ENCODE measurements at regions of chr20 and their contacts with region 1.

Region 1: DNA sequence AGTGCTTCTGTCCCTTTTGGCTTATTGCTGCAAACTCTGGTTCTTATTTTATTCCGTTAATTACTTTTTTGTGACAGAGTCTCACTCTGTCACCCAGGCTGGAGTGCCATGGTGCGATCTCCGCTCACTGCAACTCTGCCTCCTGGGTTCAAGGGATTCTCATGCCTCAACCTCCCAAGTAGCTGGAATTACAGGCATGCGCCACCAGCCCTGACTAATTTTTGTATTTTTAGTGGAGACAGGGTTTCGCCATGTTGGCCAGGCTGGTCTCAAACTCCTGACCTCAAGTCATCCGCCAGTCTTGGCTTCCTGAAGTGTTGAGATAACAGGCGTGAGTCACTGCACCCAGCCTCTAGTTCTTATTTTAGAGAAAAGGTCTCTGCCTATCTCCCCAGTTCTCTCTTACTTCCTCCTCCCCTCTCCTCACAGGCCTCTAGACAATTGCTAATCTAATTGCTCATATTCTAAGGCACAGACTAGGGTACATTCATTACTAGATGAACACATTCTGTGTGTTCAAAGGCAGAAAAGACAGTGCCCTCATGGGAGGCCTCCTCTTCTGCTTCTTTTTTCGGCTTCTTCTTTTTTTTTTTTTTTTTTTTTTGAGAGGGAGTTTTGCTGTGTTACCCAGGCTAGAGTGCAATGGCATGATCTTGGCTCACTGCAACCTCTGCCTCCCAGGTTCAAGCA is 27.0 kb downstream of the EDEM2 start:
- DNase-seq: no peak

Region 2: DNA sequence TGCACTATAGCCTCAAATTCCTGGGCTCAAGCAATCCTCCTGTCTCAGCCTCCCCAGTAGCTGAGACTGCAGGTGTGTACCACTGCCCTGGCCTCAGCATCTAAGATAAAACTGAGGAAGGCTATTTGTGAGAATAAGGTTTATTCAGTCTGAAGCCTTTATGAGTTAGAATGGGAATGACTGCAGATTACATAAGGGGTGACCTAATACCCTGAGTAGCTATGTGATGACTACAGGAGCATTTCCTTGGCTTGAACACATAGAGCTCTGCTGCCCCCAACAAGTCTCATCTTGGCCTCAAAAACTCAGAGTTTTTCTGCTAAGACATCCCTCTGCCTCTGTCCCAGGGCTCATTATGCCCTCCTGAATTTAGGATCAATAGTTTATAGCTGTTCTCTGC is 172.1 kb before region 1 on chr20:
- in situ Hi-C with region 1: no loop called
- DNase-seq: no peak

Region 3: DNA sequence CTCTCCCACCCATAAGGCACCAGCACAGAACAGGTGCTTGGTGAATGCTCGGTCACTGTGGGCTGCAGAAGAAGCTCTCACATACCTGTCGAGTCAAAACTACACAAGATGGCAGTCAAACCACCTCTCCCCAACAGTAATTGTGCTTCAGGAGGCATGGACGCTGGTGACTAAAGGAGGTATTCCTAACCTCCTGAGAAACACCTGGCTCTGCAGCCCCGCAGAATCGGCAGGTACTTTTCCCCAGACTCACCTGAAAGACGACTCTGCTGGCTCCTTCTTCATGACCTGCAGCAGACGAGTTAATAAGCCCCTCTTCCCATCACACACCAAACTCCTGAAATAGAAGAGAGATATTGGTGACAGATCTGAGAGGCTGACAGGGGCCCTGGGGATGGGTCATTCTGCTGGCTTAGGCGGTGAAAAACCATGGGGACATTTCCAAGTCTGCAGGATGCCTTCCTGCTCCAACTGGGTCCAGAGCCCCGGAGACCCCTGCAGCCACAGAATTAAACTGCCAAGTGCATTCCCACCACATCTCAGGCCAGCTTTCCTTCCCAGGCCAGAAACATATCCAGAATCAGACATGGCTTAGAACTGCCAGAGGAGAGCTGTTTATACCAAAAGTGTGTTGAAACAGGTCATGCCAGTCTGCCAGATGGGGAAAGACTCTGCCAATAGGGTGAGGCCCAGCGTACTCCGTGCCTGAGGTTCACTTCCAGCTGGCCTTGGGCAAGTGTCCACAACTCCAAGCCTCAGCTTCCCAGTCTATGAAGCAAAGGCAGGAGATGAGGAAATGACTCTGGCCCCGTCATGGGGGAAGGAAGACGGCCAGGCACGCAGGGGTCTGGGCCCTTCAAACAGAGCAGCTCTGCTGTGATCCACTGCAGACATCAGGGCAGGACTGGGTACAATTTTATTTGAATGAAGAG is 111.5 kb before region 1 on chr20:
- in situ Hi-C with region 1: no loop called
- DNase-seq: no peak

Region 4: GRCh38 chr20:35085477-35086225 is 34.5 kb before region 1 on chr20:
- in situ Hi-C with region 1: no loop called
- DNase-seq: no peak

Region 5: DNA sequence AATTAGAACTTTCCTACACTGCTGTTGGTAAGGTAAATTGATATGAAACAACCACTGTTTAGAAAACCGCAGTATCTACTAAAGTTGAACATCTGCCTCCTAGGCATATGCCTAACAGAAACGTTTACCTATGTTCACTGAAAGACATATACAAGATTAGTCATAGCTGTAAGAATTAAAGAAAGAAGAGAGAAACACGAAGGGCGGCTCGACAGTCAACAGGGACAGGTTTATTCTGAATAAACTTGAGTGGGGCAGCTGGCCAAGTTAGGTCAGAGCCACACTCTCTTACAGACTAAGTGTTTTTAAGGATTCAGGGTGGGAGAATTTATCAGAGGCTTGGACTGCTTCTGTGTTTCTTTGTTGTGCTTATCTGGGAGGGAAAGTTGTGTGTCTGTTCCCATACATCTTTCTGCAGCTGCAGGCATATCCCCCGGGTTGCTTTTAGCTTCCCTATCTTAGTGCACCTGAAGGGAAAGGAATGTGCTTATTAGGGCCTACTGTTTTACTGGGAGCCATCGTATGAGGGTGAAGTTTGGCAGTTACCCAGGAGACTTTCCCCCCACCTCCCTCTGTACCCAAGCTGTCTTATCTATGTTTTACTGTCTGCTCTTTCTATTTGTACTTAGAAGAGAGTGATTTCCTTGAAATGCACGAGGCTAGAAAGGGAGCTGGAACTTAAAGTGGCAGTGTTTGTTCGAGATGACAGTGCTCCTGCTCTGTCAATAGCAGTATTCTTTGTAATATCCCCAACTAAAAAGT is 72.1 kb after region 1 on chr20:
- in situ Hi-C with region 1: loop called (anchors 5 kb)
- DNase-seq: no peak